ENCODE measurements at regions of chr10 and their contacts with region 1.

Region 1: GRCh38 chr10:69337296-69338132 is 59.2 kb downstream of the HK1 start:
- DNase-seq: no peak
- ATAC-seq: no peak
- H3K4me3 ChIP-seq: no peak overlapping the region
- H3K27ac ChIP-seq: peak overlapping the region; percentile 21; the same call in 2 of the 3 replicates
- H3K4me1 ChIP-seq: peaks cover 53 to 58% of the 10 kb centered on the region in 2 experiments
- H3K27me3 ChIP-seq: no peaks in the 10 kb centered on the region
- CTCF ChIP-seq: no peak
- EP300 ChIP-seq: no peak
- POLR2A ChIP-seq: no peak
- RAD21 ChIP-seq: no peak

Region 2: DNA sequence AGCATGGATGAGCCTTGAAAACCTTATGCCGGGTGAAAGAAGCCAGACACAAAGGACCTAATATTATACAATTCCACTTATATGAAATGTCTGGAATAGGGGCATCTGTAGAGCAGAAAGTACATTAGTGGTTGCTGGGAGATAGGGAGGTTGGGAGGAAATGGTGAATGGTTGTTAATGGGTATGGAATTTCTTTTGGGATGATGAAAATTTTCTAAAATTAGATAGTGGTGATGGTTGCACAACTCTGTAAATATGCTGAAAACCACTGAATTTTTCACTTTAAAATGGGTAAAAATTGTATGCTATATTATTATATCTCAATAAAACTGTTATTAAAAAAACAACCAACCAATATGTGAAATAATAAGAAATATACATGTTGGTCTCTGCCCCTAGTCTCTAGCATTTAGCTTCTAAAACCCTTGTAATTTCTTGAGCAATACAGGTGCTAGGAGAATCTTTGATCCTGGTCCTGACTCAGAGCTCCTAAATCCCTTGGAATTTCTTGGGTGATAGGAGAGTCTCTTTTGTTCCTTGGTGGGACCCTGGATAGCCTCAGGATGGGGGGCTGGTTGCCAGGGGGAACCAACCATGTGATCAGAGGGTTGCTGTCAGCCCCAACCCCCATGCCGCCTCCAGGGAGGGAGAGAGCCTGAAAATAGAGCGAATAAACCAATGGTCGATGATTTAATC is 15.2 kb after region 1 on chr10:
- CTCF ChIA-PET with region 1: no interaction called
- POLR2A ChIA-PET with region 1: interaction called, 10 read pairs
- in situ Hi-C with region 1: no loop called
- intact Hi-C with region 1: no loop called
- DNase-seq: no peak
- ATAC-seq: no peak
- H3K4me3 ChIP-seq: no peak overlapping the region
- H3K27ac ChIP-seq: no peak overlapping the region
- H3K4me1 ChIP-seq: no peaks in the 10 kb centered on the region
- H3K27me3 ChIP-seq: no peaks in the 10 kb centered on the region
- CTCF ChIP-seq: no peak
- EP300 ChIP-seq: no peak
- POLR2A ChIP-seq: no peak
- RAD21 ChIP-seq: no peak

Region 3: GRCh38 chr10:69367469-69367868 is 30.0 kb after region 1 on chr10:
- CTCF ChIA-PET with region 1: no interaction called
- POLR2A ChIA-PET with region 1: no interaction called
- in situ Hi-C with region 1: no loop called
- intact Hi-C with region 1: no loop called
- DNase-seq: no peak
- ATAC-seq: peak; percentile 64; the same call in 2 of the 3 replicates
- H3K4me3 ChIP-seq: no peak overlapping the region
- H3K27ac ChIP-seq: no peak overlapping the region; the same call in 2 of the 3 replicates
- H3K4me1 ChIP-seq: no peaks in the 10 kb centered on the region; a peak in 1 of 5 replicates
- H3K27me3 ChIP-seq: no peaks in the 10 kb centered on the region
- CTCF ChIP-seq: no peak
- EP300 ChIP-seq: no peak
- POLR2A ChIP-seq: no peak
- RAD21 ChIP-seq: no peak

Measured in K562 (cell line).